H1 (cell line): ENCODE measurements at regions of chr11 and their contacts with region 1.

Region 1: DNA sequence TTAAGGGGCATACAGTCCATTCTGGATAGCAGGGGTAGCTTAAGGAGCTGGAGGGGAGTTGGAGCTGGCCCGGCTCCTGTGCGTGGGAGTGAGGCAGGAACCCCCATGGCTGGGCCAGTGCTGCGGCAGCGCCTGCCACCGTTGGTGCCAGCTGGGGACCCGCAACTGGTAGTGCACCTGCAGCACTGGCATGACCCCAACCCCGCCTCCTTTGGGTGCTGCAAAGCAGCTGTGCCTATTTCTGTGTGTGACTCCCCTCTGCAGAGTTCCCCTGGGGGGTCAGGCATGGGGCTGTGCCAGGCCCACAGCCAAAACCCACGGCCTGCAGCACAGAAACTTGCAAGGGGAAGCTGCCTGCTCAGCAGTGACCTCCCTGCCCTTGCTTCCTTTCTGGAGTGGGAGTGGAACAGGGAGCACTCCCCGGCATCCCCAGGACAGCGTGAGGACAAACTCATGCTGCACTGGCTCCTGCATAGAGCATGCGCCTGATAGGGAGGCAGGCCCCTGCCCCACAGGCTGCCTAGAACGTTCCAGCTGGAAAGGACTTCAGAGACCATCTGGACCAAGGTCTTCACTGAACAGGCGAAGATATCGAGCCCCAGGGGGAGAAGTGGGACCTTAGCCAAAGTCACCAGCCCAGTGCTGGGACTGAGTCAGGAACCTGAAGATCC is 26.2 kb upstream of the RAB1B start:
- DNase-seq: no peak
- H3K4me3 ChIP-seq: no peak overlapping the region
- H3K27ac ChIP-seq: no peak overlapping the region
- H3K4me1 ChIP-seq: no peaks in the 10 kb centered on the region
- H3K27me3 ChIP-seq: no peaks in the 10 kb centered on the region
- CTCF ChIP-seq: no peak
- EP300 ChIP-seq: no peak
- POLR2A ChIP-seq: no peak
- RAD21 ChIP-seq: no peak

Region 2: DNA sequence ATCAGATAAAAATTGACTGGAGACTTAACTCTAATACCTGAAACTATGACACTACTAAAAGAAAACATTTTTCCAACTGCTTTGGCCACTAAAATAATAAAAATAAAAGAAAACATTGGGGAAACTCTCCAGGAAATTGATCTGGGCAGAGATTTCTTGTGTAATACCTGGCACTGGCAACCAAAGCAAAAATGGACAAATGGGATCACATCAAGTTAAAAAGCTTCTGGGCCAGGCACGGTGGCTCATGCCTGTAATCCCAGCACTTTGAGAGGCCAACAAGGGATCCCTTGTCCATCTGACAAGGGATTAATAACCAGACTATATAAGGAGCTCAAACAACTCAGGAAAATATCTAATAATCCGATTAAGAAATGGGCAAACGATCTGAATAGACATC is 38.4 kb before region 1 on chr11:
- CTCF ChIA-PET with region 1: no interaction called
- POLR2A ChIA-PET with region 1: no interaction called
- DNase-seq: no peak
- H3K4me3 ChIP-seq: no peak overlapping the region
- H3K27ac ChIP-seq: no peak overlapping the region
- H3K4me1 ChIP-seq: no peaks in the 10 kb centered on the region
- H3K27me3 ChIP-seq: no peaks in the 10 kb centered on the region
- CTCF ChIP-seq: no peak
- EP300 ChIP-seq: no peak
- POLR2A ChIP-seq: no peak
- RAD21 ChIP-seq: no peak

Region 3: GRCh38 chr11:66268283-66268951 is 26.2 kb after region 1 on chr11 and contains the start of gene RAB1B:
- CTCF ChIA-PET with region 1: interaction called, 10 read pairs
- POLR2A ChIA-PET with region 1: interaction called, 6 read pairs
- DNase-seq: peak; percentile 99 to 100
- H3K4me3 ChIP-seq: peak within 1 kb of the TSS; percentile 57 to 91 (median 82)
- H3K27ac ChIP-seq: peak within 1 kb of the TSS; percentile 92; the same call in 1 of the 2 replicates
- H3K4me1 ChIP-seq: peaks cover 0 to 5% (median 3%) of the 10 kb centered on the region in 4 experiments; a peak in 5 of 7 replicates
- H3K27me3 ChIP-seq: no peaks in the 10 kb centered on the region
- CTCF ChIP-seq: no peak; a peak in 1 of 4 replicates
- EP300 ChIP-seq: no peak
- POLR2A ChIP-seq: peak in 1 of 2 experiments; percentile 85; a peak in 2 of 3 replicates
- RAD21 ChIP-seq: no peak
- total RNA-seq, gene RAB1B: 100 and 106 TPM in 2 replicates